Naive thymus-derived CD4-positive, alpha-beta T cell (primary cell): ENCODE measurements at regions of chr11 and their contacts with region 1.

Region 1: GRCh38 chr11:68569357-68569756 is 108.8 kb downstream of the PPP6R3 start:
- DNase-seq: no peak
- ATAC-seq: no peak
- H3K4me3 ChIP-seq: no peak overlapping the region
- H3K4me3 Mint-ChIP-seq: no peak overlapping the region
- H3K27ac ChIP-seq: no peak overlapping the region
- H3K27ac Mint-ChIP-seq: peak overlapping the region in 1 of 9 donors; percentile 23
- H3K4me1 ChIP-seq: no peaks in the 10 kb centered on the region
- H3K4me1 Mint-ChIP-seq: peaks cover 15 to 48% (median 34%) of the 10 kb centered on the region in 7 donors
- H3K27me3 ChIP-seq: no peaks in the 10 kb centered on the region
- H3K27me3 Mint-ChIP-seq: no peaks in the 10 kb centered on the region

Region 2: DNA sequence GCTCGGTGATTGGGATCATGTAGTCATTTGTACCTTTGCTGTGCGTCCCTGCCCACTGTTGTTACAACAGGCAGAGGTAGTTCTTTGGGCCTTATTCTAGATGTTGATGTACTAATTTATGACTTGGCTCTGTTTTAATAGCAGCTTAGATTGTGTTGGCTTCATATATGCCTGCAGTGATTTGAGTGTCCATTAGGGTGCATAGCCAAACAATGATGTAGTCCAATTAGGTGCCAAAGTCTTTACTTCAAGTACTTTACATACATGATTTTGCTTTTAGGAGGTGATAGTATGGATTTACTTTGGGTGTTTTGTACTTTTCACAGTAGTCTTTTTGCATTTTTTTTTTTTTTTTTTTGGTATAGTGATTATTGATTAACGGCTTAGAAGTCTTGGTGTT is 62.4 kb before region 1 on chr11:
- CTCF ChIA-PET with region 1: no interaction called
- POLR2A ChIA-PET with region 1: interaction called, 4 read pairs
- intact Hi-C with region 1: loop called in 1 of 2 experiments (anchors 10 kb)
- DNase-seq: no peak
- ATAC-seq: no peak
- H3K4me3 ChIP-seq: no peak overlapping the region
- H3K4me3 Mint-ChIP-seq: peak overlapping the region in 9 of 10 donors; percentile 1 to 59 (median 38)
- H3K27ac ChIP-seq: no peak overlapping the region
- H3K27ac Mint-ChIP-seq: peak overlapping the region in 6 of 9 donors; percentile 10 to 82 (median 56)
- H3K4me1 ChIP-seq: peaks cover 0 to 32% of the 10 kb centered on the region in 2 donors
- H3K4me1 Mint-ChIP-seq: peaks cover 52 to 94% (median 84%) of the 10 kb centered on the region in 7 donors
- H3K27me3 ChIP-seq: no peaks in the 10 kb centered on the region
- H3K27me3 Mint-ChIP-seq: no peaks in the 10 kb centered on the region

Region 3: GRCh38 chr11:68550485-68550817 is 18.9 kb before region 1 on chr11:
- CTCF ChIA-PET with region 1: no interaction called
- POLR2A ChIA-PET with region 1: no interaction called
- intact Hi-C with region 1: loop called in 1 of 2 experiments (anchors 2 kb)
- DNase-seq: peak in 5 of 9 donors; percentile 13 to 44 (median 13)
- ATAC-seq: peak; percentile 57
- H3K4me3 ChIP-seq: no peak overlapping the region
- H3K4me3 Mint-ChIP-seq: peak overlapping the region; percentile 57 to 78 (median 69)
- H3K27ac ChIP-seq: peak overlapping the region; percentile 52
- H3K27ac Mint-ChIP-seq: peak overlapping the region; percentile 15 to 90 (median 79)
- H3K4me1 ChIP-seq: peaks cover 11 to 22% of the 10 kb centered on the region in 2 donors
- H3K4me1 Mint-ChIP-seq: peaks cover 50 to 91% (median 75%) of the 10 kb centered on the region in 7 donors
- H3K27me3 ChIP-seq: no peaks in the 10 kb centered on the region
- H3K27me3 Mint-ChIP-seq: no peaks in the 10 kb centered on the region